Activated CD4-positive, alpha-beta memory T cell treated with anti-CD3 and anti-CD28 coated beads, Interleukin-2, amount 10 ng/mL, durations not matched to agents 7 days and 5 days (primary cell): ENCODE measurements at regions of chr13 and their contacts with region 1.

Region 1: GRCh38 chr13:100573121-100573520 is 15.5 kb downstream of the GGACT start:
- DNase-seq: peak; percentile 76
- H3K4me3 Mint-ChIP-seq: no peak overlapping the region
- H3K27ac Mint-ChIP-seq: no peak overlapping the region
- H3K4me1 Mint-ChIP-seq: peaks cover 20% of the 10 kb centered on the region
- H3K27me3 Mint-ChIP-seq: peaks cover 2% of the 10 kb centered on the region

Region 2: GRCh38 chr13:100542826-100543156 is 30.3 kb before region 1 on chr13:
- CTCF ChIA-PET with region 1: no interaction called
- POLR2A ChIA-PET with region 1: no interaction called
- DNase-seq: no peak
- H3K4me3 Mint-ChIP-seq: no peak overlapping the region
- H3K27ac Mint-ChIP-seq: no peak overlapping the region
- H3K4me1 Mint-ChIP-seq: peaks cover 30% of the 10 kb centered on the region
- H3K27me3 Mint-ChIP-seq: peaks cover 2% of the 10 kb centered on the region

Region 3: DNA sequence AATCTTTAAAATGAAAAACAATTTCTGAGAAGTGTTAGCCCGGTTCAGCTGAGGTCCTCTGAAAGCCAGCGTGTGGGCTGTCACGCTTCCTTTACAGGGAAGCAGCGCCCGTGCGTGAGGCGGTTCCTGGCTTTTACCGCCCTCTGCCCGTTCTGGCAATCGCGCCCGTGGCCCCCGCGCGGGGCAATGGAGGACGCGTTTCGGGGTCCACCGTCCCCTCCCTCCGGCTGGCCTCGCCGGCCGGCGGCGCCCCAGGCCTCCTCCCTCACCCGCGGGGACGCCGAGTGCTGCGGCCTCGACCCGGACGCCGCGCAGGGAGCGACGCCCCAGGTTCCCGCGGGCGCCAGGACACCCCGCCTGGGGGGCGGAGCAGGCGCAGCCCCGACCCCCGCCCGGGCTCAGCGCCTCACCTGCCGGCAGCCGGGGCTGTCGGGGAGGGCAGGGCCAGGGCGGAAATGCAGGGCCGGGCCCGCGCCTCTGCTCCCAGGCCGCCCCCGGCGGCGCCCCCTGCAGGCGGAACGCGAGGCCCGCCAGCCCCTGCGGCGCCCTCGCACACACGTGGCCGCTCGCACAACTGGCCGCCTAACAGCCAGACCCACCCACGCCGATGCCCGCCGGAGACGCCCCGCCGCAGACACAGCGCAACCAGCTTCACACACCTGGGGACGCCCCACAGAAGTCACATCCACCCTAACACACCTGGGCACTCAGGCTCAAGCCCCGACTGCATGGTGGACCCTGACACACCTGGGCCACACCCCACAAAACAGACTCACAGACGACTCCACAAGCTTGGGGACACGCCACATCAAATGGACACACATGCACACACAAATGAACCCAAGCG is 15.4 kb after region 1 on chr13 and contains the start of gene GGACT:
- CTCF ChIA-PET with region 1: interaction called, 49 read pairs
- POLR2A ChIA-PET with region 1: interaction called, 6 read pairs
- DNase-seq: peak; percentile 85
- H3K4me3 Mint-ChIP-seq: peak within 1 kb of the TSS; percentile 71
- H3K27ac Mint-ChIP-seq: peak within 1 kb of the TSS; percentile 86
- H3K4me1 Mint-ChIP-seq: peaks cover 44% of the 10 kb centered on the region
- H3K27me3 Mint-ChIP-seq: no peaks in the 10 kb centered on the region
- total RNA-seq, gene GGACT: 9.5 to 11.4 TPM

Region 4: DNA sequence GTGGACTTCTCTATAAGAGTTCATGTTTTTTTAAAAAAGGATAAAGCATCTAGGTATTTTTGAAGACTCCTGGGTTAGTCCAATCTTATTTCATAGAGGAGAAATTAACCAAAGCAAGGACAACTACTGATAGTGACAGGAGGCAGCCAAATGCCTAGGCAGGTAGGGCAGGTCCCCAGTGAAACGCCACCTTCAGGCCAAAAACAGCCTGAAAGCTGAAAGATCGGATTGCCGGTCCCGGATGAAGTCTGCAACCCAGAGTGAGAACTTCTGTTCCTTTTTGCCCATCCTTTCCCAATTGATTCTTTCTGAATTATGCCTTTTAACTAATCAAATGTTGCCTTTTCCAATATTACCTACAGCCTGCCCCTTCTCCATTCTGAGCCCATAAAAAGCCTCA is 21.6 kb after region 1 on chr13:
- CTCF ChIA-PET with region 1: interaction called, 30 read pairs
- POLR2A ChIA-PET with region 1: interaction called, 4 read pairs
- DNase-seq: no peak
- H3K4me3 Mint-ChIP-seq: no peak overlapping the region
- H3K27ac Mint-ChIP-seq: no peak overlapping the region
- H3K4me1 Mint-ChIP-seq: peaks cover 2% of the 10 kb centered on the region
- H3K27me3 Mint-ChIP-seq: no peaks in the 10 kb centered on the region

Region 5: DNA sequence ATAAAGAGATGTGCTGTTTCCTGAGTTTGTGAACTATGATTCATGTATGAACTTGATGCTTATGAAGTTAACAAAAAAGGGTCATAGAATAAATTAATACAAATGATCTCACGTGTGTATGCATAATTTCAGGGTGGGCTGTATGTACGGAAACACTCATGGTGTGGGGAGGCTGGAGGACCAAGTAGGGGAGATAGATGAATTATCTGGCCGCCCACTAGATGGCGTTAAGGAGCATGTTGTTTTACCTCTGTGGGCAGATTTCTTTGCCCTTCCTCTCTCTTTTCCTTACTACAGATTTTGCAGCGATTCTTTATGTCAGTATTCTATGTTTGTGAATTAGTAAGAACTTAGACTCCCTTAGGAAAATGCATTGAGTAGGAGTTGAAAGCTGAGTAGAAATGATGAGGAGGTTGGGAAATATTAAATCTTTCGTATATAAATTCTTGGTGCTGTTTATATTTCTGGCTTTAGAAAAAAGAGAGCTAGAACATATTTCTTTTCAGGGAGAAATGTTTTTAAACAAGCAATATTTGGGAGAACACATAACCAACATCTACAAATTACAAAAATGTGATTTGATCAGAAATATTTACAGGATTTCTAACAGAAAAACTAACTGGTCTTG is 148.9 kb after region 1 on chr13:
- CTCF ChIA-PET with region 1: interaction called, 15 read pairs
- POLR2A ChIA-PET with region 1: no interaction called
- DNase-seq: peak; percentile 53
- H3K4me3 Mint-ChIP-seq: no peak overlapping the region
- H3K27ac Mint-ChIP-seq: no peak overlapping the region
- H3K4me1 Mint-ChIP-seq: no peaks in the 10 kb centered on the region
- H3K27me3 Mint-ChIP-seq: peaks cover 15% of the 10 kb centered on the region

Region 6: GRCh38 chr13:101127741-101128353 is 554.7 kb after region 1 on chr13:
- CTCF ChIA-PET with region 1: interaction called, 29 read pairs
- POLR2A ChIA-PET with region 1: no interaction called
- DNase-seq: no peak
- H3K4me3 Mint-ChIP-seq: no peak overlapping the region
- H3K27ac Mint-ChIP-seq: no peak overlapping the region
- H3K4me1 Mint-ChIP-seq: no peaks in the 10 kb centered on the region
- H3K27me3 Mint-ChIP-seq: peaks cover 12% of the 10 kb centered on the region